ENCODE measurements at regions of chr21 and their contacts with region 1.

Region 1: GRCh38 chr21:34202553-34203372 is 129.4 kb downstream of the MRPS6 start:
- DNase-seq: no peak
- ATAC-seq: no peak

Region 2: GRCh38 chr21:33924079-33924765 is 278.5 kb before region 1 on chr21:
- intact Hi-C with region 1: loop called (anchors 5 kb)
- DNase-seq: peak; percentile 93
- ATAC-seq: peak; percentile 95

Region 3: GRCh38 chr21:34078915-34079314 is 123.8 kb before region 1 on chr21:
- intact Hi-C with region 1: loop called (anchors 2 kb)
- DNase-seq: no peak
- ATAC-seq: no peak

Region 4: DNA sequence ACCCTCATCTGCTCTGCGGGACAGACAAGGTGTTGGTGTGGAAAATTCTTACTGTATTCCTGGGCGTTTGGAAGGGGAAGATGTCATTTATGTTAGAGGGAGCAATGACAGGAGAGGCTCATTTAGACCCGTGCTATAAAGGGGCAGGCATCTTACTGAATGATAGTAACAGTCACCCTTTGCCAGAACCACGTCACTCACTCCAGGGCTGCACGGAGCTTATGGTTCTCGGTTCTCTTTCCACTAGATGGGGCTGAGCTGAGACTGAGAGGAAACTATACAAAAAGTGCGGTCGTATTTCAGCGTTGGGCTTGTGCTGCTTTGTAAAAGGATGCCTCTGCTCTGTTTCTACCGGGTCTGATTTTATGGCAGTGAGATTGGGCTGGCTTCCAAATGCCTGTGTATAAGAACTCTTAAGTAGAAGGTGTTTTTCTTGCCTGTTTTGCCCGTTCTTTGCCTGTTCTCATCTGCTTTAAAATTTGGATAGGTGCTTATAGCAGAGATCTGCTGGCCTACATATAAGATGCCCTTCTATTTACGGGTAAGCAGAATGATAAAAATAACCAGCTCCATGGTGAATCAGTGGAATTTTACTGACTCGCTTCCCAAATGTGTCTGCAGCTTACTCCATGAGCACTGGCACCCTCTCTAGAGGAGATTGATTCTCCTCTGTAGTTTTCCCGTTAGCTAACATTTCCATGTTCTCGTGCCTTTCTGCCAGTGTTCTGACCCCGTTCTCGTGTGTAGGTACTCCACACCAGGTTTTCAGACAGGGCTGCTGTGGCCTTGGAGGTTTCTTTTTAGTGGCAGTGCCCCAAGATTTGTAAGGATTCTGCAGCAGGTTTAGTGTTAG is 73.5 kb before region 1 on chr21:
- intact Hi-C with region 1: loop called (anchors 5 kb)
- DNase-seq: no peak
- ATAC-seq: peak; percentile 93

Region 5: GRCh38 chr21:34345091-34345871 is 142.5 kb after region 1 on chr21:
- intact Hi-C with region 1: loop called (anchors 5 kb)
- DNase-seq: no peak
- ATAC-seq: peak; percentile 40